Activated CD4-positive, alpha-beta T cell treated with anti-CD3 and anti-CD28 coated beads for 36 hours (primary cell): ENCODE measurements at regions of chr4 and their contacts with region 1.

Region 1: DNA sequence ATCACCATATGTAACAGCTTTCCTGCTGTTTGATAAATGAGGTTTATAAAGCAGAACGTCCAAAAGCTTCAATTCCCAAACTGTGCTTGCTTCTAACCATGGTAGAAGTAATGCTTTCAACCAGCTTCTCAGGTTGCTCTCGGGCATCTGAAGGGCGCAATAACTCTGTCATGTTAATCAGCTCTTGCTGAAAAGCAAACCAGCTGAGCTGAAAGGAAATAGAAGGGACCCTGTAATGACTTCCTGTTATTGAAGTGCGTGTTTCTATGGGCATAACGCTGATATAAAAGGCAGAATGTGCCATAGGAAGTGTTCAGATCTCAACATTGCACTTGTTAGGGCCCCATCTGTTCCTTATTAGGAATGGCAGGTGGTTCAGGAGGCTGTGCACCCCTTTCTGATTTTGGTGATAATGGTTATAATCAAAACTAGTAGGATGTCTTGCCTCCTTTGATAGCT is 21.2 kb downstream of the HERC3 start:
- DNase-seq: peak; percentile 43
- ATAC-seq: peak; percentile 75
- H3K4me3 Mint-ChIP-seq: peak overlapping the region; percentile 59
- H3K27ac Mint-ChIP-seq: peak overlapping the region; percentile 90
- H3K4me1 Mint-ChIP-seq: peaks cover 78% of the 10 kb centered on the region
- H3K27me3 Mint-ChIP-seq: no peaks in the 10 kb centered on the region

Region 2: DNA sequence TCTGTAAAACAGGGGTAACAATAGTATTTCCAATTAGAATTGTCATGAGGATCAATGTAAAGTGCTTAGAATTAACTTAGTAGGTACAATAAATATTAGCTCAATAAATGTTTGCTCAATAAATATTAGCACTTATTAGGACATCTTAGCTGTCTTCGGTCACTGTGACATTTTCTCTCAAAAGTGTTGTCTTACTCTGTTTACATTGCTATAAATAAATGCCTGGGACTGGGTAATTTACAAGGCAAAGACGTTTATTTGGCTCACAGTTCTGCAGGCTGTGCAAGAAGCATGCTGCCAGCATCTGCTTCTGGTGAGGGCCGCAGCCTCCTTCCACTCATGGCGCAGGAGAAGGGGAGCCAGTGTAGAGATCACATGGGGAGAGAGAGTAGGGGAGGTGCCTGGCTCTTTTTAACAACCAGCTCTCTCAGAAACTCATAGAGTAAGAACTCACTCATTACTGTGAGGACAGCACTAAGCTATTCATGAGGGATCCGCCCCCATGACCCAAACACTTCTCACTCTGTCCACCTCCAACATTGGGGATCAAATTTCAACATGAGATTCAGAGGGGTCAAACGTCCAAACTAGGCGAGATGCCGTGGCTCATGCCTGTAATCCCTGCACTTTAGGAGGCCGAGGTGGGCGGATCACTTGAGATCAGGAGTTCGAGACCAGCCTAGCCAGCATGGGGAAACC is 278.3 kb before region 1 on chr4:
- CTCF ChIA-PET with region 1: no interaction called
- POLR2A ChIA-PET with region 1: no interaction called
- intact Hi-C with region 1: no loop called
- DNase-seq: no peak
- ATAC-seq: no peak
- H3K4me3 Mint-ChIP-seq: no peak overlapping the region
- H3K27ac Mint-ChIP-seq: no peak overlapping the region
- H3K4me1 Mint-ChIP-seq: no peaks in the 10 kb centered on the region
- H3K27me3 Mint-ChIP-seq: no peaks in the 10 kb centered on the region

Region 3: DNA sequence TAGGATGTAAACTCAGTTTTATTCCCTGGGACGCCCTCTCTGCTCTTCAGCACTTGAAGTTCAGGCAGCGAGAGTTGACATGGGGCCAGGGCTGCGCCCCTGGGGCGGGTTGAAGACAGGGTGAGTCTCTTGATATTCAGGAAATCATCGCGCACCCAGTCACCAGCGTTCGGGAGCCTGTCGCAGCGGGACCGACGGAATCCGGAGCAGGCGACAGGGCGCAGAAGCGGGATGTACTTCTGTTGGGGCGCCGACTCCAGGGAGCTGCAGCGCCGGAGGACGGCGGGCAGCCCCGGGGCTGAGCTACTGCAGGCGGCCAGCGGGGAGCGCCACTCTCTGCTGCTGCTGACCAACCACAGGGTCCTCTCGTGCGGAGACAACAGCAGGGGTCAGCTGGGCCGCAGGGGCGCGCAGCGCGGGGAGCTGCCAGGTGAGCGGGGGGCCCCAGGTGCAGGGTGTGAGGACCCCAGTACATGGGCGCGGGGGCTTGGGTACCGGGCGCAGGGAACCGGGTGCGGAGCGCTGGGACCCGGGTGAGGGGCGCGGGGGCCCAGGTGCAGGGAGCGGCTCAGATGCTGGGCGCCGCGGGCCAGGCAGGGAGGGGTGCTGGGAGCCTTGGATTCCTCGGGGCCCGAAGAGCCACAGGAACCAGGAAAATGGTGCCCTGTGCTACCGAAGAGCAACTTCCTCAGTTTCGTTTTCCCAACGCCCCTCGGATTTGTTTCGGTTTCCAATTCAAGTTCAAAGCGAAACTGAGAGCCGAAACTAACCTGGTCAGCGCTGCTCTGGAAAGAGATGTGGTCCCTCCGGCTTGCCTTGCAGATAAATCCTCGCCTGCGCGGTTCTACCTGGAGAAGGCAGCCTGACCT is 234.5 kb before region 1 on chr4 and contains the start of gene HERC6:
- CTCF ChIA-PET with region 1: no interaction called
- POLR2A ChIA-PET with region 1: no interaction called
- intact Hi-C with region 1: loop called in 1 of 2 experiments (anchors 5 kb)
- DNase-seq: peak; percentile 88
- ATAC-seq: peak; percentile 47
- H3K4me3 Mint-ChIP-seq: peak within 1 kb of the TSS; percentile 75
- H3K27ac Mint-ChIP-seq: peak within 1 kb of the TSS; percentile 84
- H3K4me1 Mint-ChIP-seq: peaks cover 39% of the 10 kb centered on the region
- H3K27me3 Mint-ChIP-seq: no peaks in the 10 kb centered on the region
- total RNA-seq, gene HERC6: 7.3 to 9.3 TPM